B cell (primary cell): ENCODE measurements at regions of chr1 and their contacts with region 1.

Region 1: GRCh38 chr1:30748699-30749401 is 8.7 kb downstream of the LAPTM5 start:
- DNase-seq: no peak
- ATAC-seq: no peak
- H3K4me3 ChIP-seq: peak overlapping the region in 4 of 5 experiments; percentile 10 to 96 (median 32)
- H3K4me3 Mint-ChIP-seq: peak overlapping the region; percentile 89
- H3K27ac ChIP-seq: peak overlapping the region; percentile 98 to 100
- H3K27ac Mint-ChIP-seq: peak overlapping the region; percentile 97
- H3K4me1 ChIP-seq: peaks cover 96 to 100% of the 10 kb centered on the region in 2 donors
- H3K4me1 Mint-ChIP-seq: peaks cover 97% of the 10 kb centered on the region
- H3K27me3 ChIP-seq: no peaks in the 10 kb centered on the region
- H3K27me3 Mint-ChIP-seq: no peaks in the 10 kb centered on the region
- CTCF ChIP-seq: no peak

Region 2: DNA sequence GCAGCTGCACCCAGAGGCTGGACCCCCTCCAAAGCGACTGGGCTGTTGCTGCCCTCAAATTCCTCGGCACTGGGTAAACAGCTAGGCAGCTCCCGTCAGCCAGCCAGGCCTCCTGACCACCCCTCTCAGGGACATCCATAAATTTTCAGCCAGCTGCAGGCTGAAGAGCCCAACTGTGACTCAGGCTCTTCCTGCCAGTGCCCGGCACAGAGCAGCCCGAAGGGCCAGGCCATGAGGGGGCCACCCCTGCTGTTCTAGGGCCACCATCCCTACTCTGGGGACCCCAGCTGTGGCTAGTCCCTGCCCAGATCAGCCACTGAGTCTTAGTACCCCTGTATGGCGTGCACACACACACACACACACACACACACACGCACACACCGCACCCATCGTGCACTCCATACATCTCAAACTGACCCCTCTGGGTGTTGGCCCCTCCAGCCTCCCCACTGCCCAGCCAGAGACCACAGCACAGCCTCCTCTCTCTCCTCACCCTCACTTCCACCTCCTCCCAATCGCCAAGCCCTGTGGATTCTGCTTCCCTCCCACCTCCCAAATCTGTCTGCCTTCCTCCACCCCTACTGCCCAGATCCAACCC is 14.9 kb after region 1 on chr1:
- CTCF ChIA-PET with region 1: interaction called, 769 read pairs
- POLR2A ChIA-PET with region 1: interaction called, 152 read pairs
- intact Hi-C with region 1: loop called (anchors 1 kb)
- DNase-seq: no peak
- ATAC-seq: no peak
- H3K4me3 ChIP-seq: no peak overlapping the region
- H3K4me3 Mint-ChIP-seq: no peak overlapping the region
- H3K27ac ChIP-seq: peak overlapping the region in 1 of 2 donors; percentile 98
- H3K27ac Mint-ChIP-seq: peak overlapping the region; percentile 95
- H3K4me1 ChIP-seq: peaks cover 58 to 67% of the 10 kb centered on the region in 2 donors
- H3K4me1 Mint-ChIP-seq: peaks cover 75% of the 10 kb centered on the region
- H3K27me3 ChIP-seq: no peaks in the 10 kb centered on the region
- H3K27me3 Mint-ChIP-seq: no peaks in the 10 kb centered on the region
- CTCF ChIP-seq: no peak